ENCODE measurements at regions of chr3 and their contacts with region 1.

Region 1: DNA sequence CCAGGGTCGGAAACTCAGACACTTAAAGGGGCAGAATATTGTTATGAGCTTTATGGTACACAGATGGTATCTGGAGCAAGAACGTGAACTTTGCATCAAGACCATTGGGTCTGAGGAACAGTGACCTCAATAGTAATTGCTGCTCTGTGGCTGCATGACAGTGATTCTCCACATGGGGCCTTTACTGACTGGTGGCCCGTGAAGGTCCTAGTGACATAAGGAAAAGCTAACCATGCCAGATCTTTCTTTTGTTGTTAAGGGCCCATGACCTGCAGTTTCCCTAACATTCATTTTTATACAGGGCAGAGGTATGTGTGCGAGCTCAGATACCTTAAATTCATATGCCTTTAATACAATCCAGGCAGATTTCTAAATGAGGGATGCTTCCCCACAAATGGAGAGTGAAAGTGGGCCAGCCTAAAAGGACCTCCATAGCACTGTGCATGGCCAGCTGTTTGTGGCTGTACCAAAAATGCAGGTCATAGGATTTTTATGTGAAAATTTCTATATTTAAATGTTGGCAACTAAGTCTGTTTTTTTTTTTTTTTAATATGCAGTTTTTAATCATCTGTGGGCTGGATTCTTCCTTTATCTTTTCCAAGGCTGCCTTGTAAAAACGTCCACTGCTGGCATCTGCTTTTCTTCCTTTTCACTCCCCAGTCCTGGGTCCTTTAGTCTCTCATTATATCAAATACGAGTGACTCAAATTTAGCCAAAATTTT is 188.0 kb upstream of the IL12A start:
- DNase-seq: no peak
- ATAC-seq: no peak
- H3K4me3 ChIP-seq: no peak overlapping the region
- H3K4me3 Mint-ChIP-seq: no peak overlapping the region
- H3K27ac ChIP-seq: no peak overlapping the region
- H3K27ac Mint-ChIP-seq: no peak overlapping the region
- H3K4me1 ChIP-seq: no peaks in the 10 kb centered on the region
- H3K4me1 Mint-ChIP-seq: no peaks in the 10 kb centered on the region
- H3K27me3 ChIP-seq: peaks cover 0 to 3% of the 10 kb centered on the region in 2 experiments
- H3K27me3 Mint-ChIP-seq: peaks cover 0 to 7% of the 10 kb centered on the region in 2 donors

Region 2: DNA sequence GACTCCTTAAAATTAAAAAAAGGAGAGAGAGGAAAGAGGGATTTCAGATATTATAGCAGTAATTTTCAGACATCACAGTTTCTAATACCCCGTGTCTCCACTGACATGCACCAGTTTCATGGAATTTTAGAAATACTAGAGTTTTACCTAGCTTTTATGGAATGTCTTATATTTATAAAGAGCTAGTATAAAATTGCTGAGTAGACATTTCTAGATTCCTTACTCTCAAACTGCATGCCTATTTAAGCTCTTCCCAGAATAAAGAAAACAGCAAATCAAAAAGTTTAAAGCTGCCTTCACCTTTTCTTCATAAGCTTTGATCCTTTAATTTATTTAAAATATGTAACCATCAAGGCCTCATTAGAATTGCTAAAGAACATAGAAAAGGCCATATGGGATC is 59.3 kb before region 1 on chr3:
- CTCF ChIA-PET with region 1: interaction called in 1 of 2 experiments, 10 read pairs
- POLR2A ChIA-PET with region 1: no interaction called
- DNase-seq: no peak
- ATAC-seq: no peak
- H3K4me3 ChIP-seq: no peak overlapping the region
- H3K4me3 Mint-ChIP-seq: no peak overlapping the region
- H3K27ac ChIP-seq: no peak overlapping the region
- H3K27ac Mint-ChIP-seq: no peak overlapping the region
- H3K4me1 ChIP-seq: no peaks in the 10 kb centered on the region
- H3K4me1 Mint-ChIP-seq: no peaks in the 10 kb centered on the region
- H3K27me3 ChIP-seq: peaks cover 0 to 2% of the 10 kb centered on the region in 2 experiments
- H3K27me3 Mint-ChIP-seq: peaks cover 4 to 5% of the 10 kb centered on the region in 2 donors